Uterus (tissue), 4 donors: ENCODE measurements at regions of chr2 and their contacts with region 1.

Region 1: DNA sequence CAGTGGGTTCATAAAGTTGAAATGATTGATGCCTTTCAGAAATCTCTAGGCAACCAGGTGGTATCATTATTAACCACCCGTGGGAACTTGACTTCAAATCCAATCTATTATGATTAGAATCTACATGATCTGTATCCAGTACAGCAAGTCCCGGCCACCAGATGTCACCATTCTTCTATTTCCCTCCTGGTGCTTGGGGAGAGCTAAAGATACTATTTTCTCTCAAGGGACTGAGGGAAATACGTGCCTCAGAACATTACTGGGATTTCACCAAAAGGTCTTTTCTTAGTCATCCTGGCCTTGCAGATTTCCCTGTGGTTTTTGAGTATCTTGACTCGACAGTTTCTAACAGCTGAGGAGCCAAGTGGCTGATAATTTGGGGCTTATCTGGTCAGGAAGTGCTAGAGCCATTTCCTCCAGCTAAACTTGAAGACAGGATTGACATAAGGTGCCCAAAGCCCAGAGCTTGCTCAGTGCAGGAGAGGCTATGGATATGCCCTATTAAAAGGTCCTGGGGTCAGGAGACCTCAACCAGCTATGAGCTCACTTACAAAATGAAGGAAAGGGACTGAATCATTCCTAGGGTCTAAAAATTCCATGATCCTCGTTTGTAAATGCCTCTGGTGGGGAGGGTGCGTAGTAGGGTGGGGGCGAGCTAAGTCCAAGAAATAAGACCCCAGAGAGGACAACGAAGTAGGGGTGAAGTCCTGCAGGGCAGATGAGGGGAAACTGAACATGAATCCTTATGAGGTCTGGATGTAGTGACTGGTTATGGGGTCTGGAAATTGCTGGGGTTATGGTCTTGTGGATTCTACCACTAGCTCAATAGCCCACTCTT is 135.4 kb upstream of the MGAT5 start:
- DNase-seq: peak; percentile 85 to 91
- H3K4me3 ChIP-seq: no peak overlapping the region
- H3K27ac ChIP-seq: peak overlapping the region; percentile 55 to 91
- H3K4me1 ChIP-seq: no peaks in the 10 kb centered on the region
- H3K27me3 ChIP-seq: no peaks in the 10 kb centered on the region
- CTCF ChIP-seq: peak; percentile 72 to 89 (median 81)
- POLR2A ChIP-seq: no peak

Region 2: DNA sequence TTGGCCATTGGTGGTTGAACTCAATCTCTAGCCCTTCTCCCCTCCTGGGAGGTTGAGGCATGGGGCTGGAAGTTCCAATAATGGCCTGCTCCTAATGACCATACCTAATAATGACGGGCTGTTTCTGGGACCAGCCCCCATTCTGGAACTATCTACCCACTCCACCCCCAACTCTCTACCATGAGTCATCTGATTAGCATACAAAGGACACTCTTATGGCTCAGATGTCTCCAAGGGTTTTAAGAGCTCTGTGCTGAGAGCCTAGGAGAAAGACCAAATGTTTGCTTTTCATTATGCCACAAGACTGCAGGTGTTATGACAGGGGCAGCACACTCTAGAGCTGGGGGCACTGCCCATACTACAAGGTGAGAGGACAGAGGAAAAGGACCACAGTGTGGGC is 413.2 kb before region 1 on chr2:
- intact Hi-C with region 1: no loop called
- DNase-seq: no peak
- H3K4me3 ChIP-seq: no peak overlapping the region
- H3K27ac ChIP-seq: no peak overlapping the region
- H3K4me1 ChIP-seq: no peaks in the 10 kb centered on the region
- H3K27me3 ChIP-seq: no peaks in the 10 kb centered on the region
- CTCF ChIP-seq: no peak
- POLR2A ChIP-seq: no peak

Region 3: DNA sequence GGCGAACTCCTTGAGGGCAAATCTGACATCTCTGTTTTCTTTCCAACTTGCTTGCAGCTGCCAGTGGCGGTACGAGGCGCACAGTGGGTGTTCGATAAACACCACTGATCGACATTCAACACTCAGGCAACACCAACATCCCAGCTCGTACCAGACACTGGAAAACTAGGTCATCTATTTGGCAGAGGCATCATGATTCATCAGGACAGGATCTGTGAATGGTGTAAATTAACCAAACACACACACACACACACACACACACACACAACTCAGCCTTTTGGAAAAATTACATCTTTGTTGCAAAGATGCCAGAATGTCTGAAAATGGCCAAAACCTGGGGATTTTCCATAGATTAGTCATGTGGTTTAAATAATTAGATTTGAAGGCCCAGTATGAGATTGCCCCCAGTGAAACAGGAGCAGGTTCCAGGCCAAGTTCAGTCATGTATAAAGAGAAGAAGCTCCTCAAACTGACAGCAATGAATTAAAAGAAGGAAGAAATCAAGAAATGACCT is 399.8 kb before region 1 on chr2:
- intact Hi-C with region 1: no loop called
- DNase-seq: no peak
- H3K4me3 ChIP-seq: no peak overlapping the region
- H3K27ac ChIP-seq: no peak overlapping the region
- H3K4me1 ChIP-seq: no peaks in the 10 kb centered on the region
- H3K27me3 ChIP-seq: no peaks in the 10 kb centered on the region
- CTCF ChIP-seq: no peak
- POLR2A ChIP-seq: no peak

Region 4: GRCh38 chr2:134411828-134412638 is 293.5 kb after region 1 on chr2:
- intact Hi-C with region 1: loop called (anchors 5 kb)
- DNase-seq: peak; percentile 57 to 65
- H3K4me3 ChIP-seq: no peak overlapping the region
- H3K27ac ChIP-seq: no peak overlapping the region
- H3K4me1 ChIP-seq: no peaks in the 10 kb centered on the region
- H3K27me3 ChIP-seq: no peaks in the 10 kb centered on the region
- CTCF ChIP-seq: peak; percentile 42 to 70 (median 64)
- POLR2A ChIP-seq: no peak